Activated naive CD4-positive, alpha-beta T cell treated with anti-CD3 and anti-CD28 coated beads for 36 hours (primary cell): ENCODE measurements at regions of chr16 and their contacts with region 1.

Region 1: DNA sequence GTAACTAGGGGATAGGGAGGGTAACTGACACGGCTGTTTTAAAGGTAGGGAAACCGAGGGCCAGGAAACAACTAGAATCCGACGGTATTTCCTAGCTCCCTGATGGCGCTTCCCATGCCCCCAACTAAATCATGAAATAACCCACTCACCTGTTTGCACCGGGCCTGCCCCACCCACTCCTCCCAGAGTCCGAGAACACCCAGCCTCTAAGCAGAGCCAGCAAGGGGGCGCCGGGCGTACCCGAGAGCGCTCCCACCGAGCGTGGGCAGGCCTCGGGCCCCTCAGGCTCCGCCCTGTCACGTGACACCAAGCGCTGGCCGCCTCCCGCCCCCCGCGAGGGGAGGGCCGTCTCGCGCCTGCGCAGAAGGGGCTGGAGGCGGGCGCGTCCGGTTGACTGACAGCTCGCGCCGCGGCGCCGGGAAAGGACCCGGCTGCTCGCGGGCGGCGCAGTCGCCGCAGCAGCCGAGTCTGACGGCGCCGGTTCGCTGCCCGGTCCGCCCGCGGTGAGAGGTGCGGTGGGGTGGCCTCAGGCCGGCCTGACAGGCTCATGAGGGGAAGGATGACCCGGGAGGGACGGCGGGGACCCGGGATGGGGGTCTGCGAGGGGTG is at the start of gene KIAA0513:
- DNase-seq: peak; percentile 95
- H3K4me3 Mint-ChIP-seq: peak within 1 kb of the TSS; percentile 87
- H3K27ac Mint-ChIP-seq: peak within 1 kb of the TSS; percentile 95
- H3K4me1 Mint-ChIP-seq: peaks cover 33% of the 10 kb centered on the region
- H3K27me3 Mint-ChIP-seq: no peaks in the 10 kb centered on the region
- total RNA-seq, gene KIAA0513: 9.7 to 9.8 TPM

Region 2: DNA sequence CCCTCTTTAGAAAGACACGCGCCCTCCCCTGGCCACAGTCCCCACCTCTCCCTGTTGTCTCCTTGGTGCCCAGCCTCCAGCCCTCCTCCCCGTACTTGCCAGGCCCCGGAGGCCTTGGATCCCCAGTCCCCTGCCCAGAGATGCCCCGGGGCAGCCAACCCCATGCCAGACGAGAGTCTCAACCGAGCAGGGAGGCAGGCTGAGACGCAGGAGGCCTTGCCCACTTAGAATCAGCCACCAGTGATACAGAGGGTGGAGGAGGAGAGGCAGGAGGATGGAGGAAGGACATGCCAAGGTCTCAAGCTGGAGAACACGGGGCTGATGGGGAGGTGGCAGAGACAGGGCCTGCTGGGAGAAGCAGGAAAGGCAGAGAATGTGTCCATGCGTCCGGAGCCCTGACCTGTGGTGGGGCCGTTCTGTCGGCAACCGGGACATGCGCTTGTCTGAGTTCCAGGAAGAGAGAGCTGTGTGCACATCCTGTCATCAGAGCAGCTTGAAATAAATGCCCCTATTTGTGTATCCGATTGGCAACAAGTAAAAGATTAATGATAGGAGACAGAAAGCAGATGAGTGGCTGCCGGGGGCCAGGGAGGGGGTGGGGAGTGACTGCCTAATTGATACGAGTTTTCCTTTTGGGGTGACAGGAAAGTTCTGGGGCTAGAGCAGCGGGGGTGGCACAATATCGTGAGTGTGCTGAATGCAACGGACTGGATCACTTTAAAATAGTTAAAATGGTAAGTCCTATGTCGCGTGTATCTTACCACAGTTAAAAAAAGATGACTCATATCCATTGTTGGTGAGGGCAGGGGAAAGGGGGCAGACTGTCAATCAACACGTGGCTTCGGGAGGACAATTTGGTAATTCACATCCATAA is 478.2 kb before region 1 on chr16:
- CTCF ChIA-PET with region 1: no interaction called
- intact Hi-C with region 1: loop called (anchors 5 kb)
- DNase-seq: peak; percentile 65
- H3K4me3 Mint-ChIP-seq: peak overlapping the region; percentile 86
- H3K27ac Mint-ChIP-seq: peak overlapping the region; percentile 97
- H3K4me1 Mint-ChIP-seq: peaks cover 62% of the 10 kb centered on the region
- H3K27me3 Mint-ChIP-seq: no peaks in the 10 kb centered on the region

Region 3: GRCh38 chr16:84754353-84754856 is 273.0 kb before region 1 on chr16:
- CTCF ChIA-PET with region 1: no interaction called
- intact Hi-C with region 1: loop called (anchors 1 kb)
- DNase-seq: peak; percentile 87
- H3K4me3 Mint-ChIP-seq: no peak overlapping the region
- H3K27ac Mint-ChIP-seq: no peak overlapping the region
- H3K4me1 Mint-ChIP-seq: peaks cover 86% of the 10 kb centered on the region
- H3K27me3 Mint-ChIP-seq: no peaks in the 10 kb centered on the region

Region 4: DNA sequence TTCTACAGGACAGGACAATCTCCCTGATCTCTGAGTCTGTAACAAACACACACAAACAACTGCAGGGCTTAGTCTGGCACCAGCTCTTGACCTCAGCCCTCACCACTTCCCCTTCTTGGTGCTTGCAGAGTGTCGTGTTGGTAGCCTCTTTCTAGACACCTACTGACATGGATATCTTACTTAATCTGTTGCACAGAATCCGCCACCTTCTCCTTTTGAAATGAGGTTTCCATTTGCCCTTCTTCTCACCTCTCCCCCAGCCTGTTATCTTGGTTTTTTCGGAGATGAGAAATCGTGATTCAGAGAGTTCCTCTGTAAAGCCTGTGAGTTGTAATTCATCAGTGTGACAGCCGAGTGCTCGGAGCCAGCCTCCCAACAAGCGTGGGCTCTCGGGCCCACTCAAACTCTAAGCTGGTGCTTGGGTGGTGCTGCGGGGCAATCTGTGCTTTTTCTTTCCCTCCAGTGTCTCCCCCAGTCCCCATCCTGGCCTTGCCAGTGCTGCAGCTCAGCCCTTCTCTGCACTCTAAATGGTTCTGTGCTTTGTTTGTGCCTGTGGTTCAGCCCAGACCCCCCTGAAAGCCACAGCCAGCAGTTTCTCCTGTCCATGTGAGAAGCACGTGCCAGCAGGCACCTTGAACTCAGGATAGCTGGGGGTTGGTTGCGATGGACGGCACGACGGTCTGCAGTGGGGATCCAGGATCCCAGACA is 28.2 kb after region 1 on chr16:
- CTCF ChIA-PET with region 1: interaction called, 6 read pairs
- intact Hi-C with region 1: loop called (anchors 1 kb)
- DNase-seq: peak; percentile 77
- H3K4me3 Mint-ChIP-seq: peak overlapping the region; percentile 64
- H3K27ac Mint-ChIP-seq: peak overlapping the region; percentile 84
- H3K4me1 Mint-ChIP-seq: peaks cover 39% of the 10 kb centered on the region
- H3K27me3 Mint-ChIP-seq: no peaks in the 10 kb centered on the region

Region 5: GRCh38 chr16:85305996-85306792 is 278.7 kb after region 1 on chr16:
- CTCF ChIA-PET with region 1: no interaction called
- intact Hi-C with region 1: loop called (anchors 2 kb)
- DNase-seq: peak; percentile 98
- H3K4me3 Mint-ChIP-seq: peak overlapping the region; percentile 42
- H3K27ac Mint-ChIP-seq: peak overlapping the region; percentile 78
- H3K4me1 Mint-ChIP-seq: peaks cover 66% of the 10 kb centered on the region
- H3K27me3 Mint-ChIP-seq: no peaks in the 10 kb centered on the region

Region 6: GRCh38 chr16:85888405-85889331 is 861.2 kb after region 1 on chr16:
- CTCF ChIA-PET with region 1: no interaction called
- intact Hi-C with region 1: loop called (anchors 10 kb)
- DNase-seq: peak; percentile 73
- H3K4me3 Mint-ChIP-seq: no peak overlapping the region
- H3K27ac Mint-ChIP-seq: peak overlapping the region; percentile 85
- H3K4me1 Mint-ChIP-seq: peaks cover 44% of the 10 kb centered on the region
- H3K27me3 Mint-ChIP-seq: peaks cover 13% of the 10 kb centered on the region